ENCODE measurements at regions of chr20 and their contacts with region 1.

Region 1: GRCh38 chr20:52379723-52380336 is 188.3 kb upstream of the ZFP64 start:
- DNase-seq: peak; percentile 11
- H3K4me3 ChIP-seq: no peak overlapping the region
- H3K27ac ChIP-seq: no peak overlapping the region
- H3K4me1 ChIP-seq: no peaks in the 10 kb centered on the region
- CTCF ChIP-seq: peak; percentile 97

Region 2: DNA sequence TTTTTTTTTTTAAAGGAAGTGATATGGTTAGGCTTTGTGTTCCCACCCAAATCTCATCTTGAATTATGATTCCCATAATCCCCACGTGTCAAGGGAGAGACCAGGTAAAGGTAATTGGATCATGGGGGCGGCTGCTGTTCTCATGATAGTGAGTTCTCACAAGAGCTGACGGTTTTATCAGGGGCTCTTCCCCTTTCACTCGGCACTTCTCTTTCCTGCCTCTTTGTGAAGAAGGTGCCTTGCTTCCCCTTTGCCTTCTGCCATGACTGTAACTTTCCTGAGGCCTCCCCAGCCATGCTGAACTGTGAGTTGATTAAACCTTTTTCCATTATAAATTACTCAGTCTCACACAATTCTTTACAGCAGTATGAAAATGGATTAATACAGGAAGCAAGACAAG is 252.5 kb before region 1 on chr20:
- CTCF ChIA-PET with region 1: no interaction called
- POLR2A ChIA-PET with region 1: no interaction called
- intact Hi-C with region 1: loop called (anchors 10 kb)
- DNase-seq: peak; percentile 3
- H3K4me3 ChIP-seq: no peak overlapping the region
- H3K27ac ChIP-seq: no peak overlapping the region
- H3K4me1 ChIP-seq: no peaks in the 10 kb centered on the region
- CTCF ChIP-seq: no peak

Region 3: DNA sequence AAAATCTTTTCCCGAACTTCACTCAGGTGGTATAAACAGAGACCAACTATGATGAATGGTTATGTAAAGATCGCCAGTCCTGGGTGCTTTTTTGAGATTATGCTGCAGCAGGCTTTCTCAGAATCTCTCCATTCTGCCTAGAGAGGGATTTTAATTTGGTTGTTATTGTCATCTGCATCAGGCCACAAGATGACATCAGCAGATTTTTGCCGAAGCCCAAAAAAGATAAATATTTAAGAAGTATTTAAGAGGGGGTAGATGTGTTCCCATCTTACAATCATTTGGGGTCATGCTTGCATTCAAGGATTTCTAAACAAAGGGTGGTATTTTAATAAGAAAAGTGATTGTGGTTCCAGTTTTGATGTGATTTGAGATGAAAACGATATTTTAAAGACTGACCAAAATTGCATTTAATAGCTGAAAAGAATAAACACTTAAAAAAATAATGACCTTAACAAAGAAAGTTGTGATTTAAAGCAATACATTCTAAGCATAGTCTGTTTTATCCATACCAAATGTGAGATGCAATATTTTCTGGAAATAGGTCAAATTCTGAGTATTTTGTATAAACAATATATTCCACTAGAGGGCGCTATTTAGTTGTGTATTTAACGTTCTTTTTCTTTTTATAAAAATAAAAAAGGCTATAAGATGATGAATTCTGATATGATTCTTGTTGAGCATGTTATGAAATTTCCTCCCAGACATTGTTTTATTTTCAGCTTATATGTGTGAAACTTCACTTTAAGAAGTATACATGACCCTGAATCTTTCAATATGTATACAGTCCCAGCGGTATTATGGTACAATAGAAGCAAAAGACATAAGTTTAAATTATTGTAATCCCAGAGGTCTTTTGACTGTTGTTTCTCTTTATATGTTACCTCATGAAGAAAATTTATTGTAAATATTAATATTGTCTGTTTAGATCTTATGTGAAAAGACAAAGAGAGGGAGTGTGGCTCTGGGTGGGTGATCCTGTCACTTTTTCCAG is 137.3 kb before region 1 on chr20:
- CTCF ChIA-PET with region 1: no interaction called
- POLR2A ChIA-PET with region 1: no interaction called
- intact Hi-C with region 1: loop called (anchors 5 kb)
- DNase-seq: peak; percentile 57
- H3K4me3 ChIP-seq: no peak overlapping the region
- H3K27ac ChIP-seq: no peak overlapping the region
- H3K4me1 ChIP-seq: no peaks in the 10 kb centered on the region
- CTCF ChIP-seq: peak; percentile 92

Region 4: GRCh38 chr20:52312132-52312729 is 67.6 kb before region 1 on chr20:
- CTCF ChIA-PET with region 1: no interaction called
- POLR2A ChIA-PET with region 1: no interaction called
- intact Hi-C with region 1: loop called (anchors 5 kb)
- DNase-seq: peak; percentile 69
- H3K4me3 ChIP-seq: no peak overlapping the region
- H3K27ac ChIP-seq: no peak overlapping the region
- H3K4me1 ChIP-seq: no peaks in the 10 kb centered on the region
- CTCF ChIP-seq: peak; percentile 92

Measured in OCI-LY7 (cell line).